ENCODE measurements at regions of chr9 and their contacts with region 1.

Region 1: DNA sequence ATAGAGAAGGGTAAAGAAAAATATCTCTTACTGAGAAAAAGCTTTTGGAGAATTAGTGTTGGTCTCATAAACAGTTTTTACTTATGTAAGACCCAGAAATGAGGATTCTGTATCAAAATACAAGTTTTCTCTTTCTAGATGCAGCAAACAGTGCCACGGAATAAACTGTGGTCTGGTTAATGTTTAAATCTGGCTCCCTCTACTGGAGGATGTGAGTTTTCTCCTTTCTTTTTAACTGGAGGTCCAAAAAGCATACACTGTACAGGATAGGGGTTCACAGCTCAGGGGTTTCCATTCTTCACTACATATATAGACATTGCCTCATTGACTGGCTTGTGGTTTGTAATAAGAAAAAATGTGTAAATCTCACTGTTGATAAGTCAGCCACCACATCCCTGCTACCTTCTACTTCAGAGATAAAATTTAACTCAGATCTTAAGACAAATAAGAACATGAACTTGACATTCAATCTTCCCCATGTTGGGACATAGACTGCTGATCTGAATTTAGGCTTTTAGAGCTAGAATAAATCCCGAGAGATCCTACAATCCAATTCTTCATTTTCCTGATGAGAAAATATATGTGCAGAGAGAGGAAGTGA is 98.9 kb downstream of the CFAP95 start:
- DNase-seq: peak; percentile 24
- H3K4me3 ChIP-seq: no peak overlapping the region
- H3K27ac ChIP-seq: no peak overlapping the region
- H3K27me3 ChIP-seq: no peaks in the 10 kb centered on the region
- CTCF ChIP-seq: peak; percentile 75

Region 2: DNA sequence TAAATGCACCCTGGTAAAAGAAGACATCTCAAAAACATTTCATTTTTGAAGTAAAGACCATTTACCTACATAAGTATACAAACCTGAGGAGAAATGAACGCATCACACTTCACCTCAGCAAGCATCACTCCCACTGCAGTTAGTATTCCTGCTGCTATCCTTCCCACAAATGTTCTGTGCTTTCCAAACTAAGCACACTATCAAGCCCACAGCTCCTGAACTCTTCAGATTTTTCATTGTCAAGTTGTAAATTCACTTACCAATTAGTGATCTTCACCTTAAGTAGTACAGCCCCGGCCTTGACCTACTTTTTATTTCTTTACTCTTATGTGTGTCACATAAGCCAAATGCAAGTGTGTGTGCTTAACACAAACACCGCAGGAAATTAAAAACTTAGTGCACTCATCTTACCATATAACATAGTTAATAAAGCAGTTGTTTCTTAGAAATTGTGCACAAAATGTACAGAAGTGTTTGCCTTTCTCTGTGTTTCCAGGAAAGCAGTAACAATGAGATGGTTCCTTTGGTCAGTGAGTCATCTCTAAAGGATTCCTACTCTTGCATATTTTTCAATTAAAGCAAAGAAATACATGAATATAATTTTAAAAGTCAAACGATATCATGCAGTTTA is 416.8 kb before region 1 on chr9:
- CTCF ChIA-PET with region 1: no interaction called
- POLR2A ChIA-PET with region 1: no interaction called
- DNase-seq: no peak
- H3K4me3 ChIP-seq: no peak overlapping the region
- H3K27ac ChIP-seq: no peak overlapping the region
- H3K27me3 ChIP-seq: no peaks in the 10 kb centered on the region
- CTCF ChIP-seq: no peak

Region 3: GRCh38 chr9:69745716-69746437 is 173.7 kb before region 1 on chr9:
- CTCF ChIA-PET with region 1: interaction called, 32 read pairs
- POLR2A ChIA-PET with region 1: no interaction called
- DNase-seq: no peak
- H3K4me3 ChIP-seq: no peak overlapping the region
- H3K27ac ChIP-seq: no peak overlapping the region
- H3K27me3 ChIP-seq: no peaks in the 10 kb centered on the region
- CTCF ChIP-seq: peak; percentile 45

Region 4: DNA sequence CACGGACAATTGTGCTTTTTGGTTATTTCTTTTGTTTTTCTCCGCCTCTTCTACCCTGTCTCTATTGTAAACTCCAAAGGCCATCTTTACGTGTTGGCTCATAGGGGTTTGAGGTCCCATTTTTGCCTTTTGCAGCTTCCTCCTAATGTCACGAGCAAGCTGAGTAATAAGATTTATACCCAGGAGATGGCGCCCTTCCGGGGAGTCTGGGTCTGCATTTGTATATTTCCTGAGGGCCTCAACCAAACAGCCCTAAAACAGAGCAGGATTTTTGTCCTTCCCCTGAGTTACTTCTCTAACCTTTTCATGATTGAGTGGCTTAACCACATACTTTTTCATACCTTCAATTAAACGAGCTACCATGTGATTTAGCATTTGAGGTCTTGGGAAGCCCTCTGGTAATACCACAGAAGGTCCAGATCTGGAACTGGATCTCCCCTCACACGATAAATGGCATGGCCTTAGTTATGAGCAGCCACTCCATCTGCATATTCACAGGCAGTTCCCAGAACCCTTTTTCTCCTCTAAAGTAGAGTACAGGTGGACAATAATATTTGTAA is 110.2 kb before region 1 on chr9:
- CTCF ChIA-PET with region 1: interaction called, 23 read pairs
- POLR2A ChIA-PET with region 1: no interaction called
- DNase-seq: no peak
- H3K4me3 ChIP-seq: no peak overlapping the region
- H3K27ac ChIP-seq: no peak overlapping the region
- H3K27me3 ChIP-seq: peaks cover 4% of the 10 kb centered on the region
- CTCF ChIP-seq: peak; percentile 40

Region 5: GRCh38 chr9:69898714-69899209 is 20.8 kb before region 1 on chr9:
- CTCF ChIA-PET with region 1: interaction called, 20 read pairs
- POLR2A ChIA-PET with region 1: no interaction called
- DNase-seq: peak; percentile 36
- H3K4me3 ChIP-seq: no peak overlapping the region
- H3K27ac ChIP-seq: no peak overlapping the region
- H3K27me3 ChIP-seq: no peaks in the 10 kb centered on the region
- CTCF ChIP-seq: no peak

Region 6: GRCh38 chr9:69932901-69933300 is 13.3 kb after region 1 on chr9:
- CTCF ChIA-PET with region 1: interaction called, 22 read pairs
- POLR2A ChIA-PET with region 1: no interaction called
- DNase-seq: no peak
- H3K4me3 ChIP-seq: no peak overlapping the region
- H3K27ac ChIP-seq: no peak overlapping the region
- H3K27me3 ChIP-seq: no peaks in the 10 kb centered on the region
- CTCF ChIP-seq: peak; percentile 17; the same call in 1 of the 2 replicates

Measured in AG04450 (cell line).